Activated CD4-positive, alpha-beta memory T cell treated with anti-CD3 and anti-CD28 coated beads for 36 hours (primary cell): ENCODE measurements at regions of chr12 and their contacts with region 1.

Region 1: GRCh38 chr12:89949457-89950195 is 241.0 kb upstream of the ATP2B1 start:
- DNase-seq: peak; percentile 60
- H3K4me3 Mint-ChIP-seq: peak overlapping the region; percentile 4
- H3K27ac Mint-ChIP-seq: peak overlapping the region; percentile 26
- H3K4me1 Mint-ChIP-seq: peaks cover 51% of the 10 kb centered on the region
- H3K27me3 Mint-ChIP-seq: no peaks in the 10 kb centered on the region

Region 2: GRCh38 chr12:89856431-89856830 is 93.2 kb before region 1 on chr12:
- CTCF ChIA-PET with region 1: no interaction called
- POLR2A ChIA-PET with region 1: no interaction called
- intact Hi-C with region 1: loop called (anchors 1 kb)
- DNase-seq: no peak
- H3K4me3 Mint-ChIP-seq: no peak overlapping the region
- H3K27ac Mint-ChIP-seq: peak overlapping the region; percentile 43
- H3K4me1 Mint-ChIP-seq: peaks cover 52% of the 10 kb centered on the region
- H3K27me3 Mint-ChIP-seq: no peaks in the 10 kb centered on the region

Region 3: GRCh38 chr12:89862511-89863179 is 87.0 kb before region 1 on chr12:
- CTCF ChIA-PET with region 1: no interaction called
- POLR2A ChIA-PET with region 1: no interaction called
- intact Hi-C with region 1: loop called (anchors 1 kb)
- DNase-seq: peak; percentile 57
- H3K4me3 Mint-ChIP-seq: peak overlapping the region; percentile 66
- H3K27ac Mint-ChIP-seq: peak overlapping the region; percentile 95
- H3K4me1 Mint-ChIP-seq: peaks cover 67% of the 10 kb centered on the region
- H3K27me3 Mint-ChIP-seq: no peaks in the 10 kb centered on the region

Region 4: DNA sequence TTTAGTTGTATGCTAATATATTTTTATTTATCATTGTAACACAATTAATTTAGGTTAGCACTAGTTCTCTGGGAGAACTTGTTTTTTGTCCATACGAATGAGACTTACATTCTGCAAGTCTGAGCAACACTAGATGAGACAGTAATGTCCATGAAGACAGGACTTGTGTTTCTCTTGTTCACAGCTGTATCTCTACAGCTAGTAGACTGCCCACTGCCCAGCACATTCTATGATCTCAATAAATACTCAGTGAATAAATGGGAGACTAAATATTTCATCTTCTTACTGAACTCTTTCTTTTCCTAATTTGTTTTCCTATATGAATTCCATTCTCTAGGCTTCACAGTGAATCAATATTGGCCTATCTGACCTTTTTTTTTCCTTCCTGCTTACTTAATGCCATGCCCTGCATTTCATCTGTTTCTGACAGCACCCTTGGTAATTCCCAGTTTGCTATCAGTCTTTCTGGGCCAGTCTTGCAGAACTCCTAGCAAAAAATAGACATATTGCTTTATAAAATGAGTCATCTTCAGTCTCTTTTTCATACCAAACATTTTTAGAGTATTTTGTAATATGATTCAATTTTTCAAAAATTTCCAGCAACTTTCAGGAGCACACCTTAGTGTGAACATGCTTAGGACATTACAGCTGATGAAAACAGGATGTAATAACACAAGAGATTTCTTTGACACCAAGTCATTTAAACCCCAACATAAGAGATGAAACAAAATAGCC is 55.5 kb before region 1 on chr12:
- CTCF ChIA-PET with region 1: no interaction called
- POLR2A ChIA-PET with region 1: no interaction called
- intact Hi-C with region 1: no loop called
- DNase-seq: no peak
- H3K4me3 Mint-ChIP-seq: no peak overlapping the region
- H3K27ac Mint-ChIP-seq: no peak overlapping the region
- H3K4me1 Mint-ChIP-seq: peaks cover 22% of the 10 kb centered on the region
- H3K27me3 Mint-ChIP-seq: no peaks in the 10 kb centered on the region

Region 5: DNA sequence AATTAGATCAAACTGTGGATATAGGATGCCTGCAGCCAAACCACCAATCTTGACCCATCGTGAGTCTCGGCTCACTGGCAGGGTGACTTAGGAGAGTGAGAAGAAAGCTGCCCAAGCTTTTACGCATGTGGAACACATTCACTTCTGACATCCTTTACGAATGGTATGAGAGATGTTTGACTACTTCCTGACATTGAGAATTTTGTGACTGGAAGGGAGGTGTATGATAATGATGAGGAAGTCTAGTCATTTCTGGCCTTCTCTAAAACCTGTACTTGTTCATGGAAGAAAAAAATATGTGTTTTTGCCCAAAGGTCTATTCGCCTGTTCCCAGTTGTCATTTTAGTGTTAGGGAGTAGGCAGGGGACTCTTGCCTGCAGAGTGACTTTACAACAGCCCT is 13.8 kb before region 1 on chr12:
- CTCF ChIA-PET with region 1: no interaction called
- POLR2A ChIA-PET with region 1: interaction called, 3 read pairs
- intact Hi-C with region 1: loop called (anchors 1 kb)
- DNase-seq: peak; percentile 28
- H3K4me3 Mint-ChIP-seq: peak overlapping the region; percentile 5
- H3K27ac Mint-ChIP-seq: peak overlapping the region; percentile 55
- H3K4me1 Mint-ChIP-seq: peaks cover 38% of the 10 kb centered on the region
- H3K27me3 Mint-ChIP-seq: no peaks in the 10 kb centered on the region

Region 6: GRCh38 chr12:89960011-89960507 is 10.4 kb after region 1 on chr12:
- CTCF ChIA-PET with region 1: interaction called, 4 read pairs
- POLR2A ChIA-PET with region 1: interaction called, 4 read pairs
- intact Hi-C with region 1: loop called (anchors 1 kb)
- DNase-seq: peak; percentile 57
- H3K4me3 Mint-ChIP-seq: no peak overlapping the region
- H3K27ac Mint-ChIP-seq: no peak overlapping the region
- H3K4me1 Mint-ChIP-seq: peaks cover 14% of the 10 kb centered on the region
- H3K27me3 Mint-ChIP-seq: no peaks in the 10 kb centered on the region

Region 7: GRCh38 chr12:90042920-90043641 is 93.5 kb after region 1 on chr12:
- CTCF ChIA-PET with region 1: no interaction called
- POLR2A ChIA-PET with region 1: no interaction called
- intact Hi-C with region 1: loop called (anchors 5 kb)
- DNase-seq: no peak
- H3K4me3 Mint-ChIP-seq: no peak overlapping the region
- H3K27ac Mint-ChIP-seq: no peak overlapping the region
- H3K4me1 Mint-ChIP-seq: peaks cover 9% of the 10 kb centered on the region
- H3K27me3 Mint-ChIP-seq: no peaks in the 10 kb centered on the region

Region 8: GRCh38 chr12:90076851-90077319 is 127.3 kb after region 1 on chr12:
- CTCF ChIA-PET with region 1: no interaction called
- POLR2A ChIA-PET with region 1: no interaction called
- intact Hi-C with region 1: loop called (anchors 5 kb)
- DNase-seq: no peak
- H3K4me3 Mint-ChIP-seq: no peak overlapping the region
- H3K27ac Mint-ChIP-seq: peak overlapping the region; percentile 21
- H3K4me1 Mint-ChIP-seq: peaks cover 31% of the 10 kb centered on the region
- H3K27me3 Mint-ChIP-seq: no peaks in the 10 kb centered on the region